ENCODE measurements at regions of chr15 and their contacts with region 1.

Region 1: DNA sequence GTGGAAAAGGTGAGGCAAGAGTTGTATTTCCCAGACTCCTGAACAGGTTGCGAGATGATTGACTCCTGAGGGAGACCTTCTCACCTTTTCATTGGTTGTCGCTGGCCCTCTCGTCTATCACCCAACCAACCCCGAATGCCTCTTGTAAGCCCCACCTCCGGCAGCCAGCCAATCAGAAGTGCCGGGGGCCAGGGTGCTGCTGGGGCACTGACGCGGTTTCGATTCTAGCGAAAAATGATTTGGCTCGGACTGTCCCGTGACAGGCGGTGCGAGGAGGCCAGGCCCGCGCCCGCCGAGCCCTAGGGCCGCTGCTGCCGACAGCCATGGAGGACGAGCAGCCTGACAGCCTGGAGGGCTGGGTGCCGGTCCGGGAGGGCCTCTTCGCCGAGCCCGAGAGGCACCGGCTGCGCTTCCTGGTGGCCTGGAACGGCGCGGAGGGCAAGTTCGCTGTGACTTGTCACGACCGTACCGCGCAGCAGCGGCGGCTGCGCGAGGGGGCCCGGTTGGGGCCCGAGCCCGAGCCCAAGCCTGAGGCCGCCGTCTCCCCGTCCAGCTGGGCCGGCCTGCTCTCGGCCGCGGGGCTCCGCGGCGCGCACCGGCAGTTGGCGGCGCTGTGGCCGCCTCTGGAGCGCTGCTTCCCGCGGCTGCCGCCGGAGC is at the start of gene WHAMM:
- DNase-seq: peak; percentile 94
- H3K4me3 Mint-ChIP-seq: peak within 1 kb of the TSS; percentile 87
- H3K27ac Mint-ChIP-seq: peak within 1 kb of the TSS; percentile 95
- H3K4me1 Mint-ChIP-seq: peaks cover 21% of the 10 kb centered on the region
- H3K27me3 Mint-ChIP-seq: peaks cover 17% of the 10 kb centered on the region
- total RNA-seq, gene WHAMM: 4.0 and 4.2 TPM in 2 replicates

Region 2: DNA sequence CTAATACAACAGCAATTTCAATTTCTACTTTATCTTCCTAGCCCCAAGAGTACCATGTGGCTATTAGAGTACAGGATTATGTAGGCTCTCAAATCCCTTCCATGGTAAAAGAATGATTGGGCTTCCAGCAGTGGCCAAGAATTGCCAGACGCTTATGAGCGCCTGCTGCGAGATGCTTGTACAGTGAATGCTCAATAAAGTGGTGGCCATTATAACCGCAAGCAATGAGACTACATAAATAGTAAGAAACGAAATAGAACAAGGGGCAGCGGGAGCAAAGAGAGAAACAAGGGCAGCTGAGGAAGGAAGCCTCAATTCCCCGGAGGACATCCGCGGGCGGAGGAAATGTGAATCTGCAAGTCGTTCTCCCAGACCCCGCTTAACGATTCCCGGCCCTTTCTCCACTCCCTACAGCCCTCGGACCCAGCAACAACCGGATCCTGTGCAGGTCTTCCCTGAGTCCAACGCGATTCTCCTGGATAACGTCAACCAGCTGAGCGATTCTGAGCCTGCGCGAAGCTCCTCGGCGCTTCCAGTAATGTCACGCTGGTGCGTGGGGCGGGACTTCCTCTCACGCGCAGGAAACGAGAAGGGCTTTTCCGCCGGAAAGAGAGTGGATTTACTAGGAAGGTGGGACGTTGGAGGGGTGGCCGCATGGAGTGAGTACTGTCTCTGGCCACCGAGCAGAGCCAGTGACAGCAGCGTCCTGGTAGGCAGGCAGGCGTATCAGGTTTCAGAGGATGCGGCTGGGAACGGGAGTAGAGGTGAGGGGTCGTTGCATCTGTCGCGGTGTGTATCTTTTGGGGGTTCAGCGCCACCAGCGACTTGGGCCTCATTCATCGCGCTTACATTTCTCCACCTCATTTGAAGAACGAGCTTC is 59.3 kb before region 1 on chr15:
- intact Hi-C with region 1: loop called (anchors 2 kb)
- DNase-seq: peak; percentile 75
- H3K4me3 Mint-ChIP-seq: peak overlapping the region; percentile 100
- H3K27ac Mint-ChIP-seq: peak overlapping the region; percentile 99
- H3K4me1 Mint-ChIP-seq: peaks cover 28% of the 10 kb centered on the region
- H3K27me3 Mint-ChIP-seq: no peaks in the 10 kb centered on the region

Region 3: DNA sequence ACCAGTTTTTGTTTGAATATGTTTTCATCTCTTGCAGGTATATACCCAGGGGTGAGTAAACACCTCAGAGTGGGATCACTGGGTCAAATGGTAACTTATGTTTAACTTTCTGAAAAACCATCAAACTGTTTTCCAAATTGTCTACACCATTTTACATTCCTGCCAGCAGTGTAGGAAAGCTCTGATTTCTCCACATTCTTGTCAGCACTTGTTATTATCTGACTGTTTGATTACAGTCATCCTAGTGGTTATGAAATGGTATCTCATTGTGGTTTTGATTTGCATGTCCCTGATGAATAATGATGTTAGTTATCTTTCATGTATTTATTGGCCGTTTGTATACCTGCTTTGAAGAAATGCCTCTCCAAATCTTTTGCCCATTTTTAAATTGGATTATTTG is 17.5 kb before region 1 on chr15:
- intact Hi-C with region 1: no loop called
- DNase-seq: no peak
- H3K4me3 Mint-ChIP-seq: no peak overlapping the region
- H3K27ac Mint-ChIP-seq: no peak overlapping the region
- H3K4me1 Mint-ChIP-seq: no peaks in the 10 kb centered on the region
- H3K27me3 Mint-ChIP-seq: peaks cover 25% of the 10 kb centered on the region

Region 4: DNA sequence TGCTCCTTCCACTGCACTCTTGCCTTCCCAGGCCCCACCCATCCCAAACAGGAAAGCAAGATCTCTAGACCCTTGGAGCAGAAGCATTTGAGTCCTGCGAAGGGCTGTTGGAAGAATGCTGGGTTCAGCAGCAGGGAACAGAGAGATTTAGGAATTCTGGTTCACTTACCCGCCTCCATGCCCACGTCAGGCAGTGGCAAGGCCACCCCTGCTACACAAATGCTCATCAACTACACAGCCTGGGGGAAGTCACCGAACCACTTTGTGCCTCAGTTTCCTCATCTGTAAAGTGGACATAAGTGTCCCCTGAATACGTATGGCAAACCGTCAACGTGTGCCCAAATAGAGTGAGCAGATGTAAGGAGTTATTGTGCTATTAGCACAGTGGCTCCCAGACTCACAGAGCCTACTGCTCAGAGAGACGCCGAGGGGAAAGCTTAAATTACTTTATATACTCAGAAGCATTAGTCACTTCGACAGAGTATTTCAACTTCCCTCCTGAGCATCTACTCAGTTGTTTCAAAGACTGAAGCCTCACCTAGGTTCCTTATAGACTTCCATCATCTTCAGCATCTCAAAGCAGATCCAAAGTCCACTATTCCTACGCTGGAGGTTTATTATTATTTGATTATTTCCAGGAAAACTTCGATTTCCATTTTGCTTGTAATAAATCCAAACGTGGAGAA is 142.1 kb after region 1 on chr15:
- intact Hi-C with region 1: loop called (anchors 1 kb)
- DNase-seq: no peak
- H3K4me3 Mint-ChIP-seq: no peak overlapping the region
- H3K27ac Mint-ChIP-seq: no peak overlapping the region
- H3K4me1 Mint-ChIP-seq: peaks cover 13% of the 10 kb centered on the region
- H3K27me3 Mint-ChIP-seq: peaks cover 4% of the 10 kb centered on the region

Region 5: DNA sequence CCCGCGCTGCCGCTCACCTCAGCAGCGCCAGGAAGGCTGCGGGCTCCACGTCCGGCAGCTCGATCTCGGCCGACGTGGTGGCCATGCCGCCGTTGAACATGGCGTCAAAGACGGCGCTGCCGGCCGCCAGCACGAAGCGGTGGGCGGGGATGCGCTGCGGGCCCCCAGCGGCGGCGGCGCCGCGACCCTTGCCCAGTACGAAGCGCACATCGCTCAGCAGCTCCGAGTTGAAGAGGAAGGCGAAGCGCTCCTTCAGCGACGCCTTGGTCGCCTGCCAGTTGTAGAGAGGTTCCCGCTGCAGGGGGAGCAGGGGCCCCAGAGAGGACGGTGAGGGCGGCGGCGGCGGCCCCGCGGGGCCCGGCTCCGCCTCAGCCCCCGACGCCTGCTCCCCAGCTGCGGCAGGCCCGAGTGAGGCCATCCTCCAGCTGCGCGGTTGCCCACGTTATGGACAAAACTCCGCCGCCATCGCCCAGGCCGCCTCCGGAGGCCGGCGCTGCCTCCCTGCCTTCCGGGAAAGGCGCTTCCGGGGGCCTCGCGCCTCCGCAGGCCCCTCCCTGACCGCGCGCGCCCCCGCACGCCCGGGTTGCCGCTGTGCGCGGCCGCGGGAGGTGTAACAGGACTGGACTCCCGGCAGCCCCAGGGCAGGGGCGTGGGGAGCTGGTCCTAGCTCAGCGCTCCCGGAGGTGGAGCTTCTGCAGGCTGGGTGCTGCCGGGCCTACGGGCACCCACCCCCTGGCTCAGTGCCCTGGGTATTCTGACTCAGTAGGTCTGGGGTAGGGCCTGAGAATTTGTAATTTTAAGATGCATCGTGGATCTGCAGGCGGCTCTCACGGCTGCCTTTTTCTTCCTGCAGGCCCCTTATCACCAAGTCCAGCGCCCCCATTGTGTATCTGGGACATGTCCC is 257.5 kb after region 1 on chr15 and contains the start of gene BTBD1:
- intact Hi-C with region 1: loop called (anchors 5 kb)
- DNase-seq: peak; percentile 80
- H3K4me3 Mint-ChIP-seq: peak within 1 kb of the TSS; percentile 81
- H3K27ac Mint-ChIP-seq: peak within 1 kb of the TSS; percentile 72
- H3K4me1 Mint-ChIP-seq: peaks cover 20% of the 10 kb centered on the region
- H3K27me3 Mint-ChIP-seq: no peaks in the 10 kb centered on the region
- total RNA-seq, gene BTBD1: 56.8 and 59.5 TPM in 2 replicates